Left ventricle myocardium superior (tissue), 1 donor: ENCODE measurements at regions of chr11 and their contacts with region 1.

Region 1: DNA sequence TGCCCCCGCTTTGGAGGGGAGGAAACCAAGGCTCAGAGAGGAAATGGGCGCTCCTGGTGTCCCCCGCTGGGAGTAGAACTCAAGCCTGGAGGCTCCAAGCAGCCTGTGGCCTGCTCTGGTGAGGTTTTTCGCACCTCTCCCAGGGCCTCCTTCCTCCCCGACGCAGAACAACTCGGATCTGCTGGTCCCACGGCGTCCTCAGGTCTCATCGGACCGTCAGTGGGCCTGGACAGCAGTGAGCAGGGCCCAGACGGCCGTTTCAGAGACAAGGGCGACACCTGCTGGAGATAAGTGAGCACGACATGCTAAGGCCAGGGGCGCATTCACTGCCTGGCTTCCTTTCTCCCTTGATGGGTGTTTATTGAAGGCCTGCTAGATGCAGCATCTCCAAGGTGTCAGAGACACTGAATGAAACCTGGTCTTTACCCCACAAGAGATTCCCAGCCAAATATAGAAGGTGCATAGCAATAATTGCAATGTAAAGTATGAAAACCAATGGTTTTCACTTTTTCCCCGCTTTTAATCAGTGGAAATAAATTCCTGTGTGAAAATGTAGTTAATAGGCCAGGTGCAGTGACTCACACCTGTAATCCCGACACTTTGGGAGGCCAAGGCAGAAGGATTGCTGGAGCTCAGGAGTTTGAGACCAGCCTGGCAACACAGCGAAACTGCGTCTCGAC is 26.9 kb upstream of the CD82 start:
- DNase-seq: peak; percentile 86
- ATAC-seq: peak; percentile 95

Region 2: GRCh38 chr11:44095506-44096394 is 442.8 kb before region 1 on chr11 and contains the start of gene EXT2:
- intact Hi-C with region 1: loop called (anchors 10 kb)
- DNase-seq: peak; percentile 94
- ATAC-seq: peak; percentile 98
- total RNA-seq, gene EXT2: 27.2 TPM

Region 3: DNA sequence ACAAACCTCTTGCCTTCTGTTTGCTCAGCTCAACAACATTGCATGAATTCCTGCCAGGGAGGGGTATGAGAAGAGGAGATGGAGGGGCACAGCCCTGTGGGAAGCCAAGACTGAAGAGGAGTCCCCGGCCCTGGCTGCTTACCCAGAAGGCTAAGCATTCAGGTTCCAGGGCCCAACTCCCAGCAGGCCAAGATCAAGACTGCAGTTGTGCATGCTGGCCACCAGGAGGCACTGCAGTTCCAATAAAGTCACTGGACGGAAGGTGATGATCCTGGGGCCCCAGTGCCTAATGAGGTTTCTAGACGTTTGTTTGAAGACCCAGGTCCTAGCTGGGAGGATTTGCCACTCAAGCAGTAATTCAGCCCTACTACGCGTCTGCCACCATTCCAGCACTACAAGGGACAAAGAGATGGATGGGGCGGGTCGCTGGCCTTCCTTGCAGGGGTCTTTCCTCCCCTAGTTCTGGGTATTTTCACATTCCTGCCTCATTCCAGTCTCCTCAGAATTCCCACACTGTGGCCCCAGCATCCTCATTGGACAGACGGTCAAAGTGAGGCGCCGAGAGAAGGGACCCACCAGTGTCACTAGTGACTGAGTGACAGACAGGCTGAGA is 252.1 kb before region 1 on chr11:
- intact Hi-C with region 1: loop called (anchors 2 kb)
- DNase-seq: no peak
- ATAC-seq: peak; percentile 71

Region 4: DNA sequence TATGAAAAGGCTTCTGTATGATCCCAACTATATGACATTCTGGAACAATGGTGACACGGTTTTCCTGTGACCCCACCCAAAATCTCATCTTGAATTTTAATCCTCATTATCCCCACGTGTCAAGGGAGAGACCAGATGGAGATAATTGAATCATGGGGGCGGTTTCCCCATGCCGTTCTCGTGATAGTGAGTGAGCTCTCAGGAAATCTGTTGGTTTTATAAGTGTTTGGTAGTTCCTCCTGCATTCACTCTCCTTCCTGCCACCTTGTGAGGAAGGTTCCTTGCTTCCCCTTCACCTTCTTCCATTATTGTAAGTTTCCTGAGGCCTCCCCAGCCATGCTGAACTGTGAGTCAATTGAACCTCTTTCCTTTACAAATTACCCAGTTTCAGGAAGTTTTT is 135.2 kb after region 1 on chr11:
- intact Hi-C with region 1: no loop called
- DNase-seq: no peak
- ATAC-seq: no peak

Region 5: DNA sequence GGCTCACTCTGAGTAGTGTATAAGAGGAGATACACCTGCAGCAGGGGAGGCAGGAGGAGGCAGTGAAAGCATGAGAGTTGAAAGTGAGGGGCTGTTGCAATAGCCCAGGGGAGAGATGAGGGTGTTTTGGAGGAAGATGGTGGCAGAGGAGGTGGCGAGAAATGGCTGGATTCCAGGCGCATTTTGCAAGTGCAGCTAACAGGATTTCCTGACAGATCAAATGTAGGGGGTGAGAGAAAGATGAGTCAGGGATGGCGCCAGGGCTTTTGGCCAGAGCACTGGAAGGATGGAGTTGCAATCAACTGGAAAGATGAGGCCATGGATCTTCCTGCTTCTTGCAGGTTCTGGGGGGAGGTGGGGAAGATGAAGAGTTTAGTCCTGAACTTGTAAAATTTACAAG is 171.5 kb after region 1 on chr11:
- intact Hi-C with region 1: no loop called
- DNase-seq: no peak
- ATAC-seq: no peak